ENCODE measurements at regions of chr14 and their contacts with region 1.

Region 1: GRCh38 chr14:34699873-34700621 is 14.3 kb downstream of the CFL2 start:
- DNase-seq: no peak
- H3K4me3 ChIP-seq: no peak overlapping the region
- H3K27ac ChIP-seq: no peak overlapping the region
- H3K4me1 ChIP-seq: no peaks in the 10 kb centered on the region
- H3K27me3 ChIP-seq: no peaks in the 10 kb centered on the region
- CTCF ChIP-seq: no peak
- POLR2A ChIP-seq: no peak

Region 2: DNA sequence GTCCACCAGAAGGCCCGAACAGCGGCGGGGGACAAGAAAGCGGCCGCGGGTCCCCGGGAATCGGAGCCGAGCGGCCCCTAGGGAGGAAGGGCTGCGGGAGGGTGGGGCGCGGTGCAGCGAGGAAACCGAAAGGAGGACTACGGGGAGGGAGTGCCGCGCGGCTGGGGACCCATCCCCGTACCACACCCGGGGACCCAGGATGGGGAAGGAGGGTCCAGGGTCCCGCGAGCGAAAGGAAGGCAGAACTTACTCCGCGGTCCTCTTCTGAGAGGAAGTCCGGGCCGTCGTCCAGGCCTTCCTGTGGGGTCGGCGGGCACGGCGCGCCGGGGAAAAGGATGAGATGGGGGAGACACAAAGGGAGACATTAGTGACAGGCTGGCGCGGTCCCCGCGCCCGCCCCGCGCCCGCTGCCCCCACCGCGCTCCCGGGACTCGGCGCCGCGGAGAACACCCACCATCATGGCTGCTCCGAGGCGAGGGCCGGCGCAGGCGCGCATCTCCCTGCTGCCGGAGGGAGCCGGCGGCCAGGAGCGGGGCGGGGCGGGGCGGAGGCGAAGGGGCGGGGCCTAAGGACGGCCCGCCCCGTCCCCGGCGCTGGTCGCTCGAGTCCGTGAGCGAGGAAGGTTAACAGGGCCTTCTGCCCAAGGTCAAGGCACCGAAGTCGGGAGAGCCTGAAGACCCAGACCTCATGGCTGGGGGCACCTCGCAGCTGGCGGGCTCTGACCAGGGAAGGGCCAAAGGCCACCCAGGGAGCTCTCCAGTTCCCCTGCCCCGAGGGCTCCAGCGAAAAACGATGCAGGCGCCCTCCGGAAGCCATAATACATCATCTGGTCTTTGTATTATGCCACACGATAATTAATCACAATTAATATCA is 70.2 kb before region 1 on chr14 and contains the start of gene SNX6:
- intact Hi-C with region 1: loop called (anchors 10 kb)
- DNase-seq: peak; percentile 78
- H3K4me3 ChIP-seq: peak within 1 kb of the TSS; percentile 75 to 96
- H3K27ac ChIP-seq: peak within 1 kb of the TSS; percentile 88 to 93
- H3K4me1 ChIP-seq: no peaks in the 10 kb centered on the region
- H3K27me3 ChIP-seq: no peaks in the 10 kb centered on the region
- CTCF ChIP-seq: peak in 1 of 4 experiments; percentile 5
- POLR2A ChIP-seq: peak; percentile 72
- total RNA-seq, gene SNX6: 116 to 128 TPM

Region 3: DNA sequence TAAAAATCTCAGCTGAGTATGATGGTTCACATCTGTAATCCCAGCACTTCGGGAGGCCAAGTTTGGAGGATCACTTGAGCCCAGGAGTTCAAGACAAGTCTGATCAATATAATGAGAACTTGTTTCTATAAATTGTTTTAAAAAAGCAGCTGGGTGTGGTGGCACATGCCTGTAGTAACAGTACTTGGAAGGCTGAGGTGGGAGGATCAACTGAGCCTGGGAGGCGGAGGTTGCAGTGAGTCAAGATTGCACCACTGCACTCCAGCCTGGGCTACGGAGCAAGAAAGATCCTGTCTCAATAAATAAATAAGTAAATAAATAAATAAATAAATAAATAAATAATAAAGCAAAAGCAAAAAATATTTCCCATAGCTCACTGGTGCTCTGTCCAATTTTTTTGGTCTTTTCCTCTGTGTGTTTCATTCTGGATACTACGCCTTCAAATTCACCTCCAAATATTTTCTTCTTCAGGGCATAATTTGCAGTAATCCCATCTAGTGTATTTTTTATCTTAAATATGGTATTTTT is 37.4 kb before region 1 on chr14:
- intact Hi-C with region 1: no loop called
- DNase-seq: no peak
- H3K4me3 ChIP-seq: no peak overlapping the region
- H3K27ac ChIP-seq: no peak overlapping the region
- H3K4me1 ChIP-seq: no peaks in the 10 kb centered on the region
- H3K27me3 ChIP-seq: no peaks in the 10 kb centered on the region
- CTCF ChIP-seq: no peak
- POLR2A ChIP-seq: no peak

Region 4: DNA sequence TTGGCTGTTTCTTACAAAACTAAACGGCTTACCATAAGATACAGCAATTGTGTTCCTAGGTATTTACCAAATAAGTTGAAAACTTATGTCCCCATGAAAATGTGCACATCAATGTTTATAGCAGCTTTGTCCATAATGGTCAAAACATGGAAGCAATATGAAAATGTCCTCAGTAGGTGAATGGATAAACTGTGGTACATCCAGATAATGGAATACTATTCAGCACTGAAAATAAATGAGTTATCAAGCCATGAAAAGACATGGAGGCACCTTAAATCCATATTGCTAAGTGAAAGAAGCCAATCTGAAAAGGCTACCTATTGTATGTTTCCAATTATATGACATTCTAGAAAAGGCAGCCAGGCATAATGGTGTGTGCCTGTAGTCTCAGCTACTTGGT is 26.3 kb before region 1 on chr14:
- intact Hi-C with region 1: no loop called
- DNase-seq: no peak
- H3K4me3 ChIP-seq: no peak overlapping the region
- H3K27ac ChIP-seq: no peak overlapping the region
- H3K4me1 ChIP-seq: no peaks in the 10 kb centered on the region
- H3K27me3 ChIP-seq: no peaks in the 10 kb centered on the region
- CTCF ChIP-seq: no peak
- POLR2A ChIP-seq: no peak

Measured in prostate gland (tissue), 2 donors.